H1 (cell line): ENCODE measurements at regions of chr7 and their contacts with region 1.

Region 1: DNA sequence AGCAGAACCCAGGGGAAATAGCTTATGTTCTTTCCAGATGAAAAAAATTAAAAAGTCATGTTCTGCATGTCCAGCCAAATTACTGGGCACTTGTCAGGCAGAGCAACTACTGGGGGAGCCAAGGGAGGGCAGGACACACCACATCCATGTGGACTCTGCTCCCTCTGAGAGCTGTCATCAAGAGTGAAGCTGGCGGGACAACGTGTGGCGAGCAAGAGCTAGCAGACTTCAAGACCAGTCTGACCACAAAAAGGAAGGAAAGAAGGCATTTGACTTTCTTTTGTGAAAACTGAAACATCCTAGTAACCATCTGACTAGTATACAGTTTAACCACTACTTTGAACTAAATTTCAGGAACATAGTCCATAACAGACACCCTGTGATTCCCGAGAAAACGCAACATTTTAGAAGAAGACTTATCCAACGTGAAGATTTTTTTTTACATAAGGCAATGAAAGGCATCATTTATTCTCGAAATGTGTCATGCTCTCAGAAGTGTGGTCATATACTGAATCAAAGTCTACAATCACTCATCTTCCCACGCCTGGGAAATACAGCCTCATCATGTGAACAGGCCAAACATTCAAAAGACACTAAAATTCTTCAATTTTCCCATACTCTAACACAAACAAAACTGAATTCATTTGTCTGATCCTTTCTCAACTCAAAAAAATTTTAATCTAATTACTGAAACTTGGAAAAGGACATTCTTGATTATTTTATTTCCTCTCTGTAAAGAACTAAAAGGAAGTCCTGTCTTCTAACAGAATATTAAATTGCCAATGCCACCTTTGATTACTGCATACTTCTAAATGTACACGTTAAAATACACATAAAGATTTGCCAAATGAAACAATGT is 15.5 kb downstream of the CYTH3 start:
- DNase-seq: peak in 1 of 2 experiments; percentile 35
- H3K4me3 ChIP-seq: no peak overlapping the region
- H3K27ac ChIP-seq: no peak overlapping the region
- H3K4me1 ChIP-seq: peaks cover 0 to 9% (median 2%) of the 10 kb centered on the region in 4 experiments; a peak in 3 of 7 replicates
- H3K27me3 ChIP-seq: no peaks in the 10 kb centered on the region
- CTCF ChIP-seq: no peak
- EP300 ChIP-seq: no peak
- POLR2A ChIP-seq: no peak
- RAD21 ChIP-seq: no peak

Region 2: DNA sequence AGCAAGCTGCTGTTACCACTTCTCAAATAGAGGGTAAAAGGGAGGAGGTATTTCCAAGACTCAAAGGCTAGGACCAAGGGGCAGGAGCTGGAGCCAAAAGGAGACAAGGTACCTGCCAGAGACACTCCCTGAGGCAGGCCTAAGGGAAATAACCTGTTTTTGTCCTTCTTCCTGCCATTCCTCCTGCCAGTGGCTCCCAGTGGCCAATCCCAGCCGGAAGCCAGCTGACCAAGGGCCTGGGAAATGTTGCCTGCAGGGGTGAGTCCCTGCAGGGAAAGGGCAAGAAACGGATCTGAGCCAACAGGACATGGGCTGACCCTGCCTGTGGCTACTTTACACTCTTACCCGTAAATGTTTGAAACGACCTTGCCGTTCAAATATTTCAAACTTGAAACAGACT is 12.0 kb after region 1 on chr7:
- CTCF ChIA-PET with region 1: interaction called, 13 read pairs
- POLR2A ChIA-PET with region 1: interaction called, 4 read pairs
- DNase-seq: no peak
- H3K4me3 ChIP-seq: no peak overlapping the region
- H3K27ac ChIP-seq: no peak overlapping the region
- H3K4me1 ChIP-seq: peaks cover 3 to 13% (median 8%) of the 10 kb centered on the region in 4 experiments; a peak in 5 of 7 replicates
- H3K27me3 ChIP-seq: peaks cover 0 to 9% (median 6%) of the 10 kb centered on the region in 4 experiments; a peak in 4 of 7 replicates
- CTCF ChIP-seq: no peak
- EP300 ChIP-seq: no peak
- POLR2A ChIP-seq: no peak
- RAD21 ChIP-seq: no peak